Activated naive CD8-positive, alpha-beta T cell treated with anti-CD3 and anti-CD28 coated beads, Interleukin-2, amount 10 ng/mL, durations not matched to agents 7 days and 5 days (primary cell): ENCODE measurements at regions of chr2 and their contacts with region 1.

Region 1: DNA sequence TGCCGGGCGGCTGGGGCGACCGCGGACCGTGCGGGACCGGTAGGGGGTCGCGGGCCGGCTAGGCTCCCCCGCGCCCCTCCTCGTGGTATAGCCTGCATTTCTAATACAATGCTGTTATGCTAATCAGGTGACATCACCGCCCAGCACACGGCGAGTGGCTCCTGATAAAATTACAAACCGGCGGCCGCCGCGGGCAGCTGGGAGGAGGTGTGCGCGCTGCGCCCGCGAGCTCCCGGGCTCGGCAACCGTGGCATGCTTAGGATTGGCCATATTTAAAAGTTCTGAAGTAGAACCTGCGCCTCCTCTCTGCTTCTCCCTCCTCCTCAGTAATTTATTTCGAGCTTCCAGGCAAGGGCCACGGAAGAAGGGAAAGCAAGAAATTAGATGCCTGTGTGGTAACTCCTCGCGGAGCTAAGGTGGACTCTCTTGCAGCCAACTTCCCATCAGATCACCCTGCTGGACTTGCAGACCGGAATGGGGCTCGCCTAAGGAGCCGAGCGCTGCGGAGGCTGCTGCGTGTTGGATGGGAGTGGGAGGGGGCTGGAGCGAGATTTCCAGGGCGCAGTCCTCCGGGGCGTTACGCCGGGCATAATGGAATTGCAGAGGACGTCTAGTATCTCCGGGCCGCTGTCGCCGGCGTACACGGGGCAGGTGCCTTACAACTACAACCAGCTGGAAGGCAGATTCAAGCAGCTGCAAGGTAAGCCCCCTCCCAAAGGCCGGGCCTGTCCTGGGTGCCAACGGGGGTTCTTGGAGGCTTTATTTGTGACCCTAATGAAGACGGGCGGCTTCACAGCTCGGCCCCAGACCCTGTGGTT is 102.3 kb downstream of the SPTBN1 start:
- DNase-seq: peak; percentile 76
- ATAC-seq: peak; percentile 68
- H3K4me3 Mint-ChIP-seq: peak overlapping the region; percentile 96
- H3K27ac Mint-ChIP-seq: peak overlapping the region; percentile 92
- H3K4me1 Mint-ChIP-seq: peaks cover 27% of the 10 kb centered on the region
- H3K27me3 Mint-ChIP-seq: no peaks in the 10 kb centered on the region

Region 2: GRCh38 chr2:54482715-54483114 is 75.7 kb before region 1 on chr2:
- POLR2A ChIA-PET with region 1: no interaction called
- DNase-seq: no peak
- ATAC-seq: no peak
- H3K4me3 Mint-ChIP-seq: no peak overlapping the region
- H3K27ac Mint-ChIP-seq: no peak overlapping the region
- H3K4me1 Mint-ChIP-seq: no peaks in the 10 kb centered on the region
- H3K27me3 Mint-ChIP-seq: peaks cover 2% of the 10 kb centered on the region

Region 3: GRCh38 chr2:54570925-54571694 is 12.7 kb after region 1 on chr2:
- POLR2A ChIA-PET with region 1: interaction called, 243 read pairs
- DNase-seq: peak; percentile 80
- ATAC-seq: peak; percentile 40
- H3K4me3 Mint-ChIP-seq: peak overlapping the region; percentile 63
- H3K27ac Mint-ChIP-seq: peak overlapping the region; percentile 89
- H3K4me1 Mint-ChIP-seq: peaks cover 74% of the 10 kb centered on the region
- H3K27me3 Mint-ChIP-seq: no peaks in the 10 kb centered on the region

Region 4: GRCh38 chr2:54579684-54580620 is 21.6 kb after region 1 on chr2:
- POLR2A ChIA-PET with region 1: interaction called, 243 read pairs
- DNase-seq: no peak
- ATAC-seq: peak; percentile 85
- H3K4me3 Mint-ChIP-seq: peak overlapping the region; percentile 78
- H3K27ac Mint-ChIP-seq: peak overlapping the region; percentile 93
- H3K4me1 Mint-ChIP-seq: peaks cover 83% of the 10 kb centered on the region
- H3K27me3 Mint-ChIP-seq: no peaks in the 10 kb centered on the region

Region 5: DNA sequence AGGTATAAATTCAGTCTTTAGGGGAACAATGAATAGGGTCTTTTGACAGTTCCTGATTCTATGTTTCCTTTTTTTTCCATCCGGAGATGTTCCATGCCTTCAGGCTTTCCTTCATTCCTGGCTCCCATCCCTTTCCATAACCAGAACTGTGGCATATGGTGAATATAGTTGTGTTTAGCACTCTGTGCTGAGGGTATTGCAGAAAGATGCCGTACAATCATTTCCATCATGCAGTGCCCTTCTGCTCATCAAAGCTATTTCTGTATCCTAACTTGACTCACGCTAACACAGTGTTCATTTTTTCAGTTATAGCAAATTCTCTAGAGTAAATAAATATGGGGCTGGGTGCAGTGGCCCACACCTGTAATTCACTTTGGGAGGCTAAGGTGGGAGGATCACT is 33.2 kb after region 1 on chr2:
- POLR2A ChIA-PET with region 1: interaction called, 61 read pairs
- DNase-seq: no peak
- ATAC-seq: no peak
- H3K4me3 Mint-ChIP-seq: no peak overlapping the region
- H3K27ac Mint-ChIP-seq: peak overlapping the region; percentile 79
- H3K4me1 Mint-ChIP-seq: peaks cover 70% of the 10 kb centered on the region
- H3K27me3 Mint-ChIP-seq: no peaks in the 10 kb centered on the region

Region 6: DNA sequence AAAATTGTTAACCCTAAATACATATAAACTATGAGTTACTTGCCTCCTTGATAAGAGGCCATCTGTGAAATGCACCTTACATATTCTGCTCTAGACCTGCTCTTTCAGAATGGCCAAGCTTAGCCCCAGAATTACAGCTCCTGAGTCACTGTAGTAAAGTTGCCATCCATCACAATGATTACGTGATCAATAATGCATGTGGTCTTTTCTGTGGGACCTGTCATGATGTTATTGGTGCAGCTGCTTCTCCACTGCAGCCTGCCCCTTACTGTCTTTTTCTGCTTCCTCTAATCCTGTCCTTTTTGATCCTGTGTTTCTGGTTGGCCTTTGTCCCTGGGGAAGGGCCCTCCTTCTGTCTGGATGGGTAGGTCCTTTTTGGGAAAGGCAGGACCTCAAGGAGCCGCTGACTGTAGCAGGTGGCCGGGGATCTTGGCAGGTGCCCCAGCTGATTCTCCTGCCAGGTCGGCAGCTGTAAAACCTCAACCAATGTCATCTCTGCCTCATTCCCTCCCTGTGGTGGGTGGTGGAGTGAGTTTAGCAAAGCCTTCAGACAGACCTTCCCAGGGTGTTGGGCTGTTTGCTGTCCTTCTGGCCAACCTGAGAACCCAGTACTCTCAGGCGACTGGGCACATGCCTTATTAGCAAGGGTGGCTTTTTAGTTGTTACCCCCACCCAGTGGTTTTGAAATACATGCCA is 38.9 kb after region 1 on chr2:
- POLR2A ChIA-PET with region 1: interaction called, 61 read pairs
- DNase-seq: peak; percentile 46
- ATAC-seq: peak; percentile 41
- H3K4me3 Mint-ChIP-seq: peak overlapping the region; percentile 78
- H3K27ac Mint-ChIP-seq: peak overlapping the region; percentile 97
- H3K4me1 Mint-ChIP-seq: peaks cover 77% of the 10 kb centered on the region
- H3K27me3 Mint-ChIP-seq: no peaks in the 10 kb centered on the region

Region 7: GRCh38 chr2:54606393-54606969 is 48.1 kb after region 1 on chr2:
- POLR2A ChIA-PET with region 1: interaction called, 61 read pairs
- DNase-seq: no peak
- ATAC-seq: peak; percentile 74
- H3K4me3 Mint-ChIP-seq: peak overlapping the region; percentile 34
- H3K27ac Mint-ChIP-seq: peak overlapping the region; percentile 68
- H3K4me1 Mint-ChIP-seq: peaks cover 71% of the 10 kb centered on the region
- H3K27me3 Mint-ChIP-seq: no peaks in the 10 kb centered on the region